GM12878 (cell line): ENCODE measurements at regions of chr18 and their contacts with region 1.

Region 1: DNA sequence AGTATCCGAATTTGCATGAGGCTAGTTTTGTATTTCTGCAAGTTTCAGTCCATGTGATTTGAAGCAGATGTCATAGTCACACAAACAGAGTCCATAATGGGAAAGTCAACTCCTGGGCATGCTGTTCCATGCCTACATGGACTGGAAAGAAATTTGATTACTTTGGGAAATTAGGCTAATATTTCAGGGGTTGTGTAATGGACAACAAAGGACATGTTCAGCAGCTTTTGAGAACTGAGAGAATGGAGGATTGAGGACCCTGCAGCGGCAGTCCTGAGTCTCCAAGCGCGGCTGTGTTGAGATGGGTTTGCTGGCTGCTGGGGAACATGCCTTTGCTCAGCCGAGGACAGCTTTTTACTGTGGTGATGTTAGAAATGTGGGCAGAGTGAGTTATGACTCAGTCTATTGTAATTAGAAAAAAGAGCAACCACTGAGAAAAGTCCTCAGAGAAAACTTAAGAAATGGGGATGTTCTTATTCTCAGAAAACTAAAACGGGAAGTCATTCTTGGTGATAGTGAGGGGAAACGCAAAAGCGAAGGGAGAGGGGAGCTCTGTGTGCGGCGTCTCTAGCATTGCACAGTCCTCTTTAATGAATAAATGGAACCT is 149.2 kb downstream of the FAM210A start:
- DNase-seq: peak; percentile 90
- ATAC-seq: peak; percentile 93
- H3K4me3 ChIP-seq: peak overlapping the region; percentile 51
- H3K27ac ChIP-seq: peak overlapping the region; percentile 92
- H3K4me1 ChIP-seq: peaks cover 33% of the 10 kb centered on the region
- H3K27me3 ChIP-seq: no peaks in the 10 kb centered on the region
- CTCF ChIP-seq: no peak
- EP300 ChIP-seq: peak; percentile 89 to 93
- POLR2A ChIP-seq: peak; percentile 79
- RAD21 ChIP-seq: no peak

Region 2: DNA sequence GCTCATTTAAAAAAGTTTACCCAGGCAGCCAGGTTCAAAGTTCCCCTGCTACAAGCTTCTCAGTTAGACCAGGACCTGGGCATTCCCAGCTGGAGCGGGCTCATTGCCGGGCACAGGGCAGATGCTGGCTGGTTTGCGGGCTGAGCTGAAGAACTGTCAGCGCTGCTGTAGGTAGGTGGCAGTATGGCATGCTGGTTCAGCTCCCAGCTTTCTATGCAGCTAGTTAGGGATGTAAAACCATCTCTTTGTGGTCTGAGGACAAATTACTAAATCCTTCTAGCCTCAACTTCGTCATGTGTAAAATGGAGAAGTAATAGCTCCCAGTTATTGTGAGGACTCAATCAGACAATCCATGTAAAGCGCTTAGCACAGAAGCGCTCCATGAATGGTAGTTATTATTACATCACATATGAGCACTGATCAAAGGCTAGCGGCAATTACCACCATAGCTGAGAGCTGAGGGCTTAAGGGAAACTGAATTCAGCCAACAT is 361.1 kb before region 1 on chr18:
- CTCF ChIA-PET with region 1: no interaction called
- POLR2A ChIA-PET with region 1: no interaction called
- RAD21 ChIA-PET with region 1: no interaction called
- SMC1A ChIA-PET with region 1: no interaction called
- in situ Hi-C with region 1: no loop called
- intact Hi-C with region 1: no loop called
- DNase-seq: peak; percentile 4
- ATAC-seq: peak; percentile 79
- H3K4me3 ChIP-seq: no peak overlapping the region
- H3K27ac ChIP-seq: no peak overlapping the region
- H3K4me1 ChIP-seq: no peaks in the 10 kb centered on the region
- H3K27me3 ChIP-seq: peaks cover 8 to 25% of the 10 kb centered on the region in 2 experiments
- CTCF ChIP-seq: peak; percentile 49 to 70 (median 57)
- EP300 ChIP-seq: no peak
- POLR2A ChIP-seq: no peak
- RAD21 ChIP-seq: peak; percentile 55

Region 3: GRCh38 chr18:13566941-13567746 is 10.1 kb before region 1 on chr18:
- CTCF ChIA-PET with region 1: interaction called, 26 read pairs
- POLR2A ChIA-PET with region 1: interaction called, 121 read pairs
- RAD21 ChIA-PET with region 1: interaction called, 156 read pairs
- SMC1A ChIA-PET with region 1: interaction called, 133 read pairs
- in situ Hi-C with region 1: no loop called
- intact Hi-C with region 1: loop called (anchors 1 kb)
- DNase-seq: peak; percentile 89
- ATAC-seq: peak; percentile 71
- H3K4me3 ChIP-seq: peak overlapping the region; percentile 57
- H3K27ac ChIP-seq: peak overlapping the region; percentile 100
- H3K4me1 ChIP-seq: peaks cover 76% of the 10 kb centered on the region
- H3K27me3 ChIP-seq: no peaks in the 10 kb centered on the region
- CTCF ChIP-seq: 0 out of 6 replicates have a peak, but pooled peaks of 1 of the 3 experiments have one; percentile 7
- EP300 ChIP-seq: peak; percentile 84 to 97; a peak in 3 of 4 replicates
- POLR2A ChIP-seq: peak; percentile 91
- RAD21 ChIP-seq: peak; percentile 21; the same call in 1 of the 2 replicates